Transverse colon (tissue), 4 donors: ENCODE measurements at regions of chr7 and their contacts with region 1.

Region 1: GRCh38 chr7:101911800-101912715 is 94.6 kb downstream of the CUX1 start:
- DNase-seq: peak; percentile 44
- H3K4me3 ChIP-seq: no peak overlapping the region
- H3K27ac ChIP-seq: peak overlapping the region; percentile 67 to 90 (median 76)
- H3K4me1 ChIP-seq: peaks cover 10 to 24% (median 22%) of the 10 kb centered on the region in 4 donors
- H3K27me3 ChIP-seq: no peaks in the 10 kb centered on the region
- CTCF ChIP-seq: no peak
- EP300 ChIP-seq: peak; percentile 92
- POLR2A ChIP-seq: no peak

Region 2: GRCh38 chr7:101743241-101743994 is 168.6 kb before region 1 on chr7:
- in situ Hi-C with region 1: no loop called
- intact Hi-C with region 1: no loop called
- DNase-seq: peak; percentile 72
- H3K4me3 ChIP-seq: peak overlapping the region; percentile 28 to 62 (median 46)
- H3K27ac ChIP-seq: peak overlapping the region in 2 of 4 donors; percentile 5 to 31
- H3K4me1 ChIP-seq: peaks cover 6 to 13% (median 11%) of the 10 kb centered on the region in 4 donors
- H3K27me3 ChIP-seq: peaks cover 5% of the 10 kb centered on the region
- CTCF ChIP-seq: peak in 4 of 5 experiments; percentile 39 to 53 (median 51)
- EP300 ChIP-seq: no peak
- POLR2A ChIP-seq: no peak

Region 3: GRCh38 chr7:101870351-101871062 is 41.6 kb before region 1 on chr7:
- in situ Hi-C with region 1: no loop called
- intact Hi-C with region 1: no loop called
- DNase-seq: peak; percentile 55
- H3K4me3 ChIP-seq: no peak overlapping the region
- H3K27ac ChIP-seq: peak overlapping the region; percentile 54 to 60 (median 58)
- H3K4me1 ChIP-seq: peaks cover 14 to 55% (median 24%) of the 10 kb centered on the region in 4 donors
- H3K27me3 ChIP-seq: no peaks in the 10 kb centered on the region
- CTCF ChIP-seq: peak in 4 of 5 experiments; percentile 24 to 49 (median 32)
- EP300 ChIP-seq: no peak
- POLR2A ChIP-seq: no peak

Region 4: GRCh38 chr7:101947899-101948298 is 35.8 kb after region 1 on chr7:
- in situ Hi-C with region 1: no loop called
- intact Hi-C with region 1: loop called (anchors 5 kb)
- DNase-seq: peak; percentile 33
- H3K4me3 ChIP-seq: no peak overlapping the region
- H3K27ac ChIP-seq: peak overlapping the region; percentile 13 to 84 (median 73)
- H3K4me1 ChIP-seq: peaks cover 16 to 39% (median 25%) of the 10 kb centered on the region in 4 donors
- H3K27me3 ChIP-seq: no peaks in the 10 kb centered on the region
- CTCF ChIP-seq: no peak
- EP300 ChIP-seq: no peak
- POLR2A ChIP-seq: no peak